ENCODE measurements at regions of chr16 and their contacts with region 1.

Region 1: GRCh38 chr16:22297114-22297878 is at the start of gene POLR3E:
- DNase-seq: peak; percentile 99 to 100 (median 100)
- ATAC-seq: peak; percentile 82
- H3K4me3 ChIP-seq: peak within 1 kb of the TSS; percentile 87 to 94
- H3K4me3 Mint-ChIP-seq: peak within 1 kb of the TSS; percentile 97
- H3K27ac ChIP-seq: peak within 1 kb of the TSS; percentile 98 to 99
- H3K27ac Mint-ChIP-seq: peak within 1 kb of the TSS; percentile 100
- H3K4me1 ChIP-seq: peaks cover 18% of the 10 kb centered on the region
- H3K4me1 Mint-ChIP-seq: peaks cover 43% of the 10 kb centered on the region
- H3K27me3 ChIP-seq: no peaks in the 10 kb centered on the region
- H3K27me3 Mint-ChIP-seq: no peaks in the 10 kb centered on the region
- CTCF ChIP-seq: peak; percentile 78
- total RNA-seq, gene POLR3E: 300 to 307 TPM

Region 2: DNA sequence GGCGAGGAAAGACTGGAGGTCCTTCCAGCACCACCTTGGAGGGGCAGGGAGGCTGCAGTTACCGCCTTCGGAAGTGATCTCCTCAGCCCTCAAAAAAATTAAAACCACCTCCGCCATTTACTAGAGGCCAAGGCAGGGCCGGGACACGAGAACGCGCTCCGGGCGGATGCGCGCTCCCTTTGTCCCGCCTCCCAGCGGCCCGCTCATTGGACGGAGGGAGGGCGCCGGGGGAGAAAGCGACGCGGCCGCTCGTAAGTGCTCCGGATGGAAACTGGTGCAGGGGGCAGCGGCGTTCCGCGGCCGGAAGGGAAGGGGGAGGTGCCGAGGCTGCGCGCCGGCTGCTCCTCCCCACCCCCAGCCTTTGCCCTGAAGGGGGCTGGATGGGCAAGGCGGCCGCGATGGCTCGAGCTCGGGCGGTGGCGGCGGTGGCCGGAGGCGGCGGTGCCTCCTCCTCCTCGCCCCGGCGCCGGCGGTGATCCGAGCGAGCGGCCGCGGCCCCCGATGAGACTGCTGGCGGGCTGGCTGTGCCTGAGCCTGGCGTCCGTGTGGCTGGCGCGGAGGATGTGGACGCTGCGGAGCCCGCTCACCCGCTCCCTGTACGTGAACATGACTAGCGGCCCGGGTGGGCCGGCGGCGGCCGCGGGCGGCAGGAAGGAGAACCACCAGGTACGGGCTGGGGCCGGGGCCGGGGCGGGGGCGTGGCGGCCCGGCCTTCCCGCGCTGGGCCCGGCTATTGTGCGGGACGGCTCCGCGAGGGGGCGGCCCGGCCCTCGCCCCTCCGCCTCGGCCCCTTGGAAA is 697.9 kb before region 1 on chr16 and contains the start of gene METTL9:
- CTCF ChIA-PET with region 1: no interaction called
- POLR2A ChIA-PET with region 1: no interaction called
- intact Hi-C with region 1: loop called in 1 of 2 experiments (anchors 1 kb)
- DNase-seq: peak; percentile 92 to 97 (median 94)
- ATAC-seq: peak; percentile 91
- H3K4me3 ChIP-seq: peak within 1 kb of the TSS; percentile 69 to 96
- H3K4me3 Mint-ChIP-seq: peak within 1 kb of the TSS; percentile 87
- H3K27ac ChIP-seq: peak within 1 kb of the TSS; percentile 84 to 91
- H3K27ac Mint-ChIP-seq: peak within 1 kb of the TSS; percentile 96
- H3K4me1 ChIP-seq: peaks cover 47% of the 10 kb centered on the region
- H3K4me1 Mint-ChIP-seq: peaks cover 62% of the 10 kb centered on the region
- H3K27me3 ChIP-seq: no peaks in the 10 kb centered on the region
- H3K27me3 Mint-ChIP-seq: no peaks in the 10 kb centered on the region
- CTCF ChIP-seq: no peak
- total RNA-seq, gene METTL9: 93.8 to 99.0 TPM

Region 3: DNA sequence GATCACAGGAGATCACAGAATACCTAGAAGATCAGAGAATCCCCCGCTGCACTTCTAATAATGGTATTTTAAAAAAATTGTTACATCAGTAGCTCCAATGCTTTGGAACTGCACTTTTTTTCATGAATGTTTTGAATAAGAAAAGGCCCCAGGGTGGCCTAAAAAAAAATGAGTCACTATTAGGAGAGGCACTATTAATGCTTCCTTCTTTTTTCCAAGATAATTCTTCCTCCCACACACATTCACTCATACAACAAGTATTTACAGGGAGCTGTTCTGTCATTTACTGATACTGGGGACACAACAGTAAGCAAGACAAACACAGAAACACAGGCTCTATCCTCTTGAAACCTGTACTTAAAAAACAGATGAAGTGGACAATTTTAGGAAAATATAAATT is 295.7 kb before region 1 on chr16:
- CTCF ChIA-PET with region 1: interaction called, 8 read pairs
- POLR2A ChIA-PET with region 1: interaction called, 7 read pairs
- intact Hi-C with region 1: loop called (anchors 1 kb)
- DNase-seq: no peak
- ATAC-seq: no peak
- H3K4me3 ChIP-seq: no peak overlapping the region
- H3K4me3 Mint-ChIP-seq: no peak overlapping the region
- H3K27ac ChIP-seq: no peak overlapping the region
- H3K27ac Mint-ChIP-seq: no peak overlapping the region
- H3K4me1 ChIP-seq: peaks cover 11% of the 10 kb centered on the region
- H3K4me1 Mint-ChIP-seq: peaks cover 11% of the 10 kb centered on the region
- H3K27me3 ChIP-seq: no peaks in the 10 kb centered on the region
- H3K27me3 Mint-ChIP-seq: no peaks in the 10 kb centered on the region
- CTCF ChIP-seq: no peak

Region 4: GRCh38 chr16:22077700-22078313 is 219.5 kb before region 1 on chr16:
- CTCF ChIA-PET with region 1: interaction called, 3 read pairs
- POLR2A ChIA-PET with region 1: interaction called, 6 read pairs
- intact Hi-C with region 1: loop called (anchors 1 to 5 kb)
- DNase-seq: peak; percentile 37 to 78 (median 70)
- ATAC-seq: peak; percentile 69
- H3K4me3 ChIP-seq: no peak overlapping the region
- H3K4me3 Mint-ChIP-seq: no peak overlapping the region
- H3K27ac ChIP-seq: no peak overlapping the region
- H3K27ac Mint-ChIP-seq: no peak overlapping the region
- H3K4me1 ChIP-seq: no peaks in the 10 kb centered on the region
- H3K4me1 Mint-ChIP-seq: peaks cover 3% of the 10 kb centered on the region
- H3K27me3 ChIP-seq: no peaks in the 10 kb centered on the region
- H3K27me3 Mint-ChIP-seq: no peaks in the 10 kb centered on the region
- CTCF ChIP-seq: peak; percentile 78

Region 5: DNA sequence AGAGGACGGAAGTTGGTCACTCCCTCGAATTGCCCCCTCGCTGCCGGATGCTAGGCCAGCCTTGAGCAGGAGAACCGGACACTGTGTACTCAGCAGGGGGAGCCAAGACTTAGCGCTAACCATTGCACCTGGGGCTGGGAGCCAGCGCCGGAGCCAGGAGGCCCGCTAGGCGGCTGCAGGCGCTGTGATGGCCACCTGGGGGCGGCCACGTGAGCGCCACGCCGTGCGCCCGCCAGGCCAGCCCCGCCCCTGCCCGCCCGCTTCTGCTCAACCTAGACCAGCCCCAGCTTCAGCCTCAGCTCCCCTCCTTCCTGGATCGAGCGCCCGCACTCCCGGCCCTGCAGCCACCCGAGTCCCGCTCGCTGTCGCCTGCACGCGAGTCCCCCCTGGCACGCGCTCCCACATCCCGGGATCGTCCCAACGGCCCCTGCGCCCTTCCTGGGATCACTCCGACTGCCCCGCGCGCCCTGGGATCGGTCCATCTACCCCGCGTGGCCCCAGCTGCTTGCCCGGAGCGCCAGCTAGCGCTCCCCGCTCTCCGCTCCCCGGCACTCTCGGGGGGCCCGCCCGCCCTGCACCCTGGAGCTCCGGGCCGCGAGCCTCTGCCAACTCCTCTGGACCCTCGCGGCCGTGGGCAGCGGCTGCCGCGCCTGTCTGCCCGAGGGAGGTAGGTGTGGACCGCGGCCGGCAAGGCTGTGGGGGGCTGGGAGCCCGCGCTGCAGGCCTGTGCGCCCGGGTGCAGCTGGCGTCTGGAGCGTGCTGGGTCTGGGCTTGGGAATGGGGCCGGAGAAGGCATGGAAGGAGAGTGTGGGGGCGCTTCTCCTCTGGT is 91.1 kb before region 1 on chr16 and contains the start of gene EEF2K:
- CTCF ChIA-PET with region 1: interaction called, 32 read pairs
- POLR2A ChIA-PET with region 1: interaction called, 6 read pairs
- intact Hi-C with region 1: loop called (anchors 1 kb)
- DNase-seq: peak; percentile 66 to 91 (median 79)
- ATAC-seq: peak; percentile 90
- H3K4me3 ChIP-seq: peak within 1 kb of the TSS; percentile 61 to 86
- H3K4me3 Mint-ChIP-seq: peak within 1 kb of the TSS; percentile 98
- H3K27ac ChIP-seq: peak within 1 kb of the TSS; percentile 51 to 59
- H3K27ac Mint-ChIP-seq: peak within 1 kb of the TSS; percentile 92
- H3K4me1 ChIP-seq: peaks cover 20% of the 10 kb centered on the region
- H3K4me1 Mint-ChIP-seq: peaks cover 40% of the 10 kb centered on the region
- H3K27me3 ChIP-seq: no peaks in the 10 kb centered on the region
- H3K27me3 Mint-ChIP-seq: no peaks in the 10 kb centered on the region
- CTCF ChIP-seq: peak; percentile 65
- total RNA-seq, gene EEF2K: 14.4 to 14.6 TPM

Region 6: DNA sequence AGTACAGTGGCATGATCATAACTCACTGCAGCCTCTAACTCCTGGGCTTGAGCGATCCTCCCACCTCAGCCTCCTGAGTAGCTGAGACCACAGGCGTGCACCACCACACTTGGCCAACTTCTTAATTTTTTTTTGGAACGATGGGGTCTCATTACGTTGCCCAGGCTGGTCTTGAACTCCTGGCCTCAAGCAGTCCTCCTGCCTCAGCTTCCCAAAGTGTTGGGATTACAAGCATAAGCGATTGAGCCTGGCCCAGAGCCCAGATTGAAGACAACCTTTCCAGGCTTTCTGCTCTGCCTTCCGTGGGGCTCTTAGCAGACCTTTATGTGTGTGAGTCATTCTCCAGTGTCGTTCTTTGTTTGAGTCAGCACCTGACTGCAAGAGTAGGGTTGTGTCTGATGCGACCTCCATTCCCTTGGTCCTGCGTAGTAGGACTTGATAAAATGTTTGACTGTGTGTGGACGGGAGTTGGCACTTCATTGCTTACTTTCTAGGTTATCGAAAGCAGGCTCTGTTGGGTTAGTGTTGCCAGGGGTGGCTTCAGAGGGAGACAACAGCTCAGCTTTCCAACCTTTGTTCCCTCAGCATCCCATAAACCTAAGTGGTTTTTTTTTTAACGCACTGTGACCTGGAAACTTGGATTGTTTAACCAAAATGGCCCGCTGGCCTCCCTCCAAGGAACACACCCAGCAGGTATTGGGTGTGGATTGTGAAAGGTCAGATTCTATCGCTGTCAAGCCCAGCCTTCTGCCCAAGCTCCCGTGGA is 64.8 kb before region 1 on chr16:
- CTCF ChIA-PET with region 1: no interaction called
- POLR2A ChIA-PET with region 1: no interaction called
- intact Hi-C with region 1: no loop called
- DNase-seq: no peak
- ATAC-seq: no peak
- H3K4me3 ChIP-seq: no peak overlapping the region
- H3K4me3 Mint-ChIP-seq: no peak overlapping the region
- H3K27ac ChIP-seq: no peak overlapping the region
- H3K27ac Mint-ChIP-seq: no peak overlapping the region
- H3K4me1 ChIP-seq: no peaks in the 10 kb centered on the region
- H3K4me1 Mint-ChIP-seq: no peaks in the 10 kb centered on the region
- H3K27me3 ChIP-seq: no peaks in the 10 kb centered on the region
- H3K27me3 Mint-ChIP-seq: no peaks in the 10 kb centered on the region
- CTCF ChIP-seq: no peak

Region 7: DNA sequence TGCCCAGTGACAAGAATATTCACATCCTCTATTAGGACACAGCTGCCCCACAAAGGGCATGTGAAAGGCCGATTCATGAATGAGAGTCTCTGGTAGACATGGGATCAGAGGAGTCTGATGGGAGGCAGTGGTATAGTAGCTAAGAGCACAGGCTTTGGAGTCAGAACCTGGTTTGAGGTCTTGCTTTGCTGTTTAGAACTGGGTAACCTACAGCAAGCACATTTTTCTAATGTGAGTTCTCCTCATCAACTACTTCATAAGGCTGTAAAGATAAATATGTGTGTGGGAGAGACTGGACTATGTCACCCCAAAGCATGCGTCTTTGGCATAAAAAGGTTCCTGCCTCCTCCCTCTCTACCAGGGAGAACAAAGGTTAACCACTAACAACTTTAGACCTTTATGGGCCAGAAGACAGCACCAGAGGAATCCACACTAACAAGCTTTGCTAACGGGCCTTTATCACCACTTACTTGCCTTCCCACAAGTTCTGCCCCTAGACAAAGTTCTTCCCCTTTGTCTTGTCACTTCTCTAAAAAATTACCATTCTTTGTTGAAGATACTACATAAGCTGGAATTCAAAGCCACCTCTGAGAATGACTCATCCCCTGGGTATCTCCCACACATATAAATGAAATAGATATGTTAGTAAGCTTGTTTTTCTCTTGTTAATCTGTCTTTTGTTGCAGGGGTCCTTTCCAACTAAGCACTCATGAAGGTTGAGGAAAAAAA is 56.1 kb after region 1 on chr16:
- CTCF ChIA-PET with region 1: no interaction called
- POLR2A ChIA-PET with region 1: no interaction called
- intact Hi-C with region 1: loop called in 1 of 2 experiments (anchors 2 kb)
- DNase-seq: peak in 4 of 9 experiments; percentile 21 to 69 (median 36)
- ATAC-seq: peak; percentile 30
- H3K4me3 ChIP-seq: no peak overlapping the region
- H3K4me3 Mint-ChIP-seq: peak overlapping the region; percentile 19
- H3K27ac ChIP-seq: peak overlapping the region in 1 of 2 experiments; percentile 51
- H3K27ac Mint-ChIP-seq: peak overlapping the region; percentile 89
- H3K4me1 ChIP-seq: peaks cover 55% of the 10 kb centered on the region
- H3K4me1 Mint-ChIP-seq: peaks cover 59% of the 10 kb centered on the region
- H3K27me3 ChIP-seq: no peaks in the 10 kb centered on the region
- H3K27me3 Mint-ChIP-seq: no peaks in the 10 kb centered on the region
- CTCF ChIP-seq: no peak

Region 8: DNA sequence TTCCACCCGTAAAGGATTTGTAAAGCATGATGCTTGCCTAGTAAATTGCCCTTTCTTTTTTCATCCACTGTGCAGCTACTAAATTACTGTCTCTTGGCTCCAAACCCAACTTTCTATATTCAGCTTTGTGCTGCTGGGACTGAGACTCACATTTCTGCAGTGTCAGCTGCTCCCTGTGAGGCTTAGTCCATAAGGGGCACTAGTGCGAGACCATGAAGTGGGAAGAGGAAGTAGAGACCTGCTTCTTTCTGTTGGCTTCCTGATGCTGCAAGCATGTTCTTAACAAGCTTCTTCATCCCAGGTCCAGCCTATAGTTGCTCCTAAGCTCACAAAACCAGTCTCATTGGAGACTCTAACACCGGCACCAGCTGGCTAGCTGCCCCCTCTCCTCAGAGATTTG is 441.8 kb after region 1 on chr16:
- CTCF ChIA-PET with region 1: no interaction called
- POLR2A ChIA-PET with region 1: no interaction called
- intact Hi-C with region 1: no loop called
- DNase-seq: no peak
- ATAC-seq: no peak
- H3K4me3 ChIP-seq: no peak overlapping the region
- H3K4me3 Mint-ChIP-seq: no peak overlapping the region
- H3K27ac ChIP-seq: no peak overlapping the region
- H3K27ac Mint-ChIP-seq: no peak overlapping the region
- H3K4me1 ChIP-seq: no peaks in the 10 kb centered on the region
- H3K4me1 Mint-ChIP-seq: no peaks in the 10 kb centered on the region
- H3K27me3 ChIP-seq: no peaks in the 10 kb centered on the region
- H3K27me3 Mint-ChIP-seq: peaks cover 20% of the 10 kb centered on the region
- CTCF ChIP-seq: no peak